ENCODE measurements at regions of chr18 and their contacts with region 1.

Region 1: GRCh38 chr18:49021433-49022129 is 70.8 kb upstream of the SMAD7 start:
- DNase-seq: peak; percentile 86 to 92
- H3K4me3 ChIP-seq: peak overlapping the region; percentile 56
- H3K27ac ChIP-seq: peak overlapping the region; percentile 64
- H3K4me1 ChIP-seq: peaks cover 35% of the 10 kb centered on the region
- H3K27me3 ChIP-seq: no peaks in the 10 kb centered on the region
- CTCF ChIP-seq: peak; percentile 76

Region 2: DNA sequence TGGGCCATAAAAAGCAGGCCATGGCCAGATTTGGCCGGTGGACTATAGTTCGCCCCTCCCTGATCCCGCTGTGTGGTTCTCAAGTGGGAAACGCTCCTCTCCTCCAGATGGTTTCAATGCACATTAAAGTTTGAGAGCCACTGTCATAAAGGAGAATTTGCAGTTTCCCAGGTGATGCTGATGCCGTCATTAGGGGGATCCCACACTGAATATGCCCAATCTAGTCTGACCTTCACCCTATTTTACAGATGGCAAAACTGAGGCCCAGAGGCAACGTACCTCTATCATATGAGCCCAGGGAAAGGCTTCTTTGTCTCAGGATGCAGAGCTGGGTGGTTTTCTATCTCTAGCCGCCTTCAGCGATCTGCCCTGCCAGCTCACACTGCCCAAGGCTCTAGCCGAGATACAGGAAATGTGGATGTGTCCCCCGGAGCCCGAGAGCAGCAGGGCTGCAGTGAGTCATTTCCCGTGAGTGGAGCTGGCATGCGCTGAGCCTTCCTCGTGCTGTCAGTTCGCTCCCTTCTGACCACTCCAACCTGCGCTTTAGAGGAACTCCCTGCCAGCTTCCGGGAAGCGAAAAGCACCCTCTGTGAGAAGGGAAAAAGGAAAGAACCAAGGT is 187.1 kb before region 1 on chr18:
- CTCF ChIA-PET with region 1: no interaction called
- POLR2A ChIA-PET with region 1: no interaction called
- intact Hi-C with region 1: loop called (anchors 1 kb)
- DNase-seq: peak; percentile 76 to 96
- H3K4me3 ChIP-seq: peak overlapping the region; percentile 40; the same call in 1 of the 2 replicates
- H3K27ac ChIP-seq: peak overlapping the region; percentile 78
- H3K4me1 ChIP-seq: peaks cover 71% of the 10 kb centered on the region
- H3K27me3 ChIP-seq: no peaks in the 10 kb centered on the region
- CTCF ChIP-seq: no peak

Region 3: GRCh38 chr18:48951448-48952286 is 69.9 kb before region 1 on chr18:
- CTCF ChIA-PET with region 1: no interaction called
- POLR2A ChIA-PET with region 1: interaction called, 7 read pairs
- intact Hi-C with region 1: loop called (anchors 2 kb)
- DNase-seq: peak; percentile 73 to 75
- H3K4me3 ChIP-seq: peak overlapping the region; percentile 78
- H3K27ac ChIP-seq: peak overlapping the region; percentile 94
- H3K4me1 ChIP-seq: peaks cover 53% of the 10 kb centered on the region
- H3K27me3 ChIP-seq: no peaks in the 10 kb centered on the region
- CTCF ChIP-seq: no peak

Region 4: GRCh38 chr18:49006641-49007454 is 14.7 kb before region 1 on chr18:
- CTCF ChIA-PET with region 1: no interaction called
- POLR2A ChIA-PET with region 1: no interaction called
- intact Hi-C with region 1: no loop called
- DNase-seq: no peak
- H3K4me3 ChIP-seq: no peak overlapping the region
- H3K27ac ChIP-seq: no peak overlapping the region
- H3K4me1 ChIP-seq: no peaks in the 10 kb centered on the region
- H3K27me3 ChIP-seq: no peaks in the 10 kb centered on the region
- CTCF ChIP-seq: no peak

Region 5: DNA sequence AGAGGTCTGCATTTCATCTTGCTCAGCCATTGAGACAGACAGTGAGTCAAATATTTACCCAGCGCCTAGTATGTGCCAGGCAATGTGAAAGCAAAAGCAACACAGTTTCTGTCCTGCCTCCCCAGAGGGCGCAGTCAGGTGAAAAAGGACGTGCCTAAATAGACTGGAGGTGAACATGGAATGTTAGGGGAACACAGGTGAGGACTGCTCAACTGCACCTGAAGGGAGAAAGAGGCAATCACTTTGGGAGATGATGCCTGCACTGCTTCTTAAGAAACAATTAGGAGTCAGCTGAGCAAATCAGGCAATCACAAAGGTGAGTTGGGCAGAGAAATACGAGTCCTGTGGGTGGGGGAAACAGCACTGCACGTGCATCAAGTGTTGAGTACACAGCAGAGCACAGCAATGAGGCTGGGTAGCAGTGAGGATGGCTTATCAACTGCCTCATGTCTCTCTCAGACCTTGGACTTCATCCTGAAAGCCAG is 147.5 kb after region 1 on chr18:
- CTCF ChIA-PET with region 1: interaction called, 13 read pairs
- POLR2A ChIA-PET with region 1: no interaction called
- intact Hi-C with region 1: loop called (anchors 10 kb)
- DNase-seq: no peak
- H3K4me3 ChIP-seq: no peak overlapping the region
- H3K27ac ChIP-seq: no peak overlapping the region
- H3K4me1 ChIP-seq: no peaks in the 10 kb centered on the region
- H3K27me3 ChIP-seq: no peaks in the 10 kb centered on the region
- CTCF ChIP-seq: no peak

Region 6: DNA sequence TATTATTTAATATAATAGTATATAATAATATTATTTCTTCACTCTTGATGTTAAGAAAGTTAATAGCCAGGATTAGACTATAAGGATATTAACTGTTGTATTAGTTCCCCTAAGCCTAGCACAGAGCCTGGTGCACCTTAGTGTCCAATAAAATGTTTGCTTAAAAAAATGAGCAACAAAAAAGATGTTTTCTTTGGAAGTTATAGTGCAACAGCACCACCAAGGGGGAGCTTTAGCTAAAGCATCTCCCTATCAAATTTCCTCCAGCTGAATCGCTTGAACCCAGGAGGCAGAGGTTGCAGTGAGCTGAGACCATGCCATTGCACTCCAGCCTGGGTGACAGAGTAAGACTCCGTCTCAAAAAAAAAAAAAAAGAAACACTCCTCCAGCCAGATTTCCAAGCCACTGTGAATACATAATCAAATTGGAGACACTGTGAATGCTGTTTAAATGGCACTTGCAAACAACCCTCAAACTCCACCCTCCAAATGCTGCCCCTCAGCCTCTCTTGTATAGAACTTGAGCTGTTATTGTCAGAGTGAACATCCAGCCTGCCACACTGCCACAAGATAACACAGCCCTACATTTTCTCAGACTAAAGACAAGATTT is 217.0 kb after region 1 on chr18:
- CTCF ChIA-PET with region 1: no interaction called
- POLR2A ChIA-PET with region 1: no interaction called
- intact Hi-C with region 1: loop called (anchors 5 kb)
- DNase-seq: peak in 1 of 2 experiments; percentile 7
- H3K4me3 ChIP-seq: no peak overlapping the region
- H3K27ac ChIP-seq: no peak overlapping the region
- H3K4me1 ChIP-seq: no peaks in the 10 kb centered on the region
- H3K27me3 ChIP-seq: no peaks in the 10 kb centered on the region
- CTCF ChIP-seq: peak; percentile 77